OCI-LY7 (cell line): ENCODE measurements at regions of chr7 and their contacts with region 1.

Region 1: GRCh38 chr7:32588657-32589056 is 93.4 kb downstream of the AVL9 start:
- DNase-seq: no peak
- H3K4me3 ChIP-seq: no peak overlapping the region
- H3K27ac ChIP-seq: no peak overlapping the region
- H3K4me1 ChIP-seq: no peaks in the 10 kb centered on the region
- CTCF ChIP-seq: no peak

Region 2: DNA sequence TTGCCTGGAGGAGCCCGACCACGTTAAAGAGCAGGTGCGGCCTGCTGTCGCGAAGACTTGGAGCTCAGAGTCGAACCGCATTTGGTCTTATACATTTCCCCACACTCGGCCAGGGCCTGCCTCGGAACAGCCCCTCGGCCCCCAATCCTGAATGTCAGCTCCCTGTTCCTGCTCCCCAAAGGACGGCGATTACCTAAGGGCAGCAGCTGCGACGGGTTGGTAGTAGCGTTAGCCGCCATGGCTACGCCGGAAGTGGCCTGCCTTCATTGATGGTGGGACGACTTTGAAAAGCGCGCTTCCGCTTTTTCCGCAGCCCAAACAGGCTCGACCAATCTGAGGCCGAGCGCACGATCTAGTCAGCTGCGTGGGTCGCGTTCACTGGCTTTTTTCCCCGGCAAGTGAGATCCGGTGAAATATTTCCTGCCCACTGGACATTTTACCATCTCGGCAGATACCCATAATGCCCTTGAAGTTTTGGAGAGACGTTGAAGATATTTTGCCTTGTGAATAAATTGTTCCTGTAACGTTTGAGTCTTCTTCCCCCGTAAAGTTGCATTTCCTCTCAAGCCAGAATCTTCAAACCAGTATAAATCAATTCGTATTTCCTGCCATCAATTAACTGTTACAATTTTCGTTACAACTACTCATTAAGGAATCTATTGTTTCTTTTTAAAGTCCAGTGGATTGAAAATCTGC is 98.4 kb before region 1 on chr7 and contains the start of gene LSM5:
- CTCF ChIA-PET with region 1: no interaction called
- POLR2A ChIA-PET with region 1: no interaction called
- intact Hi-C with region 1: loop called (anchors 5 kb)
- DNase-seq: peak; percentile 96
- H3K4me3 ChIP-seq: peak within 1 kb of the TSS; percentile 84
- H3K27ac ChIP-seq: peak within 1 kb of the TSS; percentile 94
- H3K4me1 ChIP-seq: peaks cover 26% of the 10 kb centered on the region
- CTCF ChIP-seq: no peak
- total RNA-seq, gene LSM5: 33.8 and 38.9 TPM in 2 replicates

Region 3: DNA sequence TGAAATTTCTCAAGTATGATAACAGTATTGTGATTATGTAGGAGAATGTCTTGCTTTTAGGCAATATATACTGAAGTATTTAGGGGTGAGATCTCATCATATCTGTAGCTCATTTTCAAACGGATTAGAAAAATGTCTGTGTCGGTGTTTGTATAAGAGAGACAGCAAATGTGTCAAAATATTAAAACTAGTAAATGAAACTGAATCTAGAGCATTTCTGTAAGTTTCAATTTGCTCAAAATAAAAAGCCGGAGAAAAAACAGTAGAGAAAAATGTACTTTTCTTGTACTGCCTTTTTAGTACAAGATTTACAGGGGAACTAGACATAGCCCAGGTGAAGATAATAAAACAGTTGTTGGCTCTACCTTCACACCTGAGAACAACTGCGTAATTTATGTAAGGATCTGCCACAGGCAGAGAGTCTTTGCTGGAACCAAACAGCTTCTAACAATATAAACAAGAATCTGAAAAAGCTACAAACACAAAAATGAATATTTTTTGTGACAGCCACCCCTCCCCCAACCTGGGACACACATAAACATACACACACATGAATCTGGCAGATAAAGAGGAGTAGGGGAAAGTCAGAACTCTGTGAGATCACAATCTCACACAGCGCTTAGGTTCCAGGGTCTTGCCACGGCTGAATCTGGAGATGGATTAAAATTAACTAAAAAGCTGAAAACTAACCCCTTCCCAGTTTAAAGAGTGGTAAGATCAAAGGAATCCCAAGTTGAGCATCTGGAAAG is 59.9 kb after region 1 on chr7:
- CTCF ChIA-PET with region 1: no interaction called
- POLR2A ChIA-PET with region 1: no interaction called
- intact Hi-C with region 1: no loop called
- DNase-seq: no peak
- H3K4me3 ChIP-seq: no peak overlapping the region
- H3K27ac ChIP-seq: no peak overlapping the region
- H3K4me1 ChIP-seq: no peaks in the 10 kb centered on the region
- CTCF ChIP-seq: no peak